HCT116 (cell line): ENCODE measurements at regions of chr16 and their contacts with region 1.

Region 1: DNA sequence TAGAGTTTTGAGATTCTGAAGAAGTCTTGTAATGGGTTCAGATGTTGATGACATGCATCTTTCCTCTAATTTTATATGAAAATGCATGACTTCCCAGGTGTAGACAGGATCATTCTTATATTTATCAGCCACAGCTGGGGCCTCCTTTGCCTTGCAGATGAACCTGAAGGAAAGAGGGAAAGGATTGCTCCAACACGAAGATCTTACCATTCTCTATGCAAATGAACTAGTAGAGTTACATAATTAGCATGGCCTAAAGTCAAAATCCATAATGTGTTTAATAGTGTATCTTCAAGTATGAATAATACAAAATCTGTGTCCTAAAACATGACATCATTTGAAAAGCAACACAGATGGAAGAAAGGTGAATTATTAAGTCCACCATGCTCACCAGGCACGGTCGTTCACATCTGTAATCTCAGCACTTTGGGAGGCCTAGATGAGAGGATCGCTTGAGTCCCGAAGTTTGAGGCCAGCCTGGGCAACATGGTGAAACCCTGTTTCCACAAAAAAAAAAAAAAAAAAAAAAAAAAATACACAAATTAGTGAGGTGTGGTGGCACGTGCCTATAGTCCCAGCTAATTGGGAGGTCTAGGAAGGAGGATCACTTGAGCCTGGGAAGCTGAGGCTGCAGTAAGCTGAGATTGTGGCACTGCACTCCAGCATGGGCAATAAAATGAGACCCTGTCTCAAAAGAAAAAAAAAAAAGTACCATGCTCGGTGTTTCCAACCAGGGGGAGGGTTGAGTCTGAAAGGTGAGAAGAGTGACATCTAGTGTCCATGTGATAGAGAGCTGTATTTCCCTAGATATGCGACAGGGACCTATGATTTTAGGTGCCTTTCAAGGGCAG is 6.3 kb downstream of the VWA3A start:
- DNase-seq: peak; percentile 56
- ATAC-seq: peak; percentile 99
- H3K4me3 ChIP-seq: no peak overlapping the region
- H3K27ac ChIP-seq: no peak overlapping the region
- H3K4me1 ChIP-seq: peaks cover 0 to 11% of the 10 kb centered on the region in 2 experiments; a peak in 2 of 4 replicates
- H3K27me3 ChIP-seq: no peaks in the 10 kb centered on the region
- CTCF ChIP-seq: peak; percentile 66 to 78 (median 76); a peak in 5 of 6 replicates
- POLR2A ChIP-seq: no peak
- RAD21 ChIP-seq: peak; percentile 82

Region 2: GRCh38 chr16:21952793-21953540 is 145.7 kb before region 1 on chr16 and contains the start of gene UQCRC2:
- CTCF ChIA-PET with region 1: interaction called, 16 read pairs
- POLR2A ChIA-PET with region 1: interaction called, 4 read pairs
- RAD21 ChIA-PET with region 1: interaction called, 5 to 7 read pairs
- intact Hi-C with region 1: loop called (anchors 5 kb)
- DNase-seq: peak; percentile 93
- ATAC-seq: peak; percentile 93
- H3K4me3 ChIP-seq: peak within 1 kb of the TSS; percentile 96 to 98
- H3K27ac ChIP-seq: peak within 1 kb of the TSS; percentile 76
- H3K4me1 ChIP-seq: peaks cover 9 to 19% of the 10 kb centered on the region in 2 experiments
- H3K27me3 ChIP-seq: no peaks in the 10 kb centered on the region
- CTCF ChIP-seq: no peak
- POLR2A ChIP-seq: peak; percentile 67
- RAD21 ChIP-seq: no peak
- total RNA-seq, gene UQCRC2: 249 TPM

Region 3: GRCh38 chr16:21989133-21989532 is 109.5 kb before region 1 on chr16:
- CTCF ChIA-PET with region 1: no interaction called
- POLR2A ChIA-PET with region 1: no interaction called
- RAD21 ChIA-PET with region 1: no interaction called
- intact Hi-C with region 1: no loop called
- DNase-seq: no peak
- ATAC-seq: no peak
- H3K4me3 ChIP-seq: no peak overlapping the region
- H3K27ac ChIP-seq: no peak overlapping the region
- H3K4me1 ChIP-seq: peaks cover 0 to 22% of the 10 kb centered on the region in 2 experiments; a peak in 2 of 4 replicates
- H3K27me3 ChIP-seq: no peaks in the 10 kb centered on the region
- CTCF ChIP-seq: no peak
- POLR2A ChIP-seq: no peak
- RAD21 ChIP-seq: no peak

Region 4: GRCh38 chr16:22001591-22001990 is 97.0 kb before region 1 on chr16:
- CTCF ChIA-PET with region 1: interaction called, 29 read pairs
- POLR2A ChIA-PET with region 1: no interaction called
- RAD21 ChIA-PET with region 1: interaction called, 3 read pairs
- intact Hi-C with region 1: no loop called
- DNase-seq: no peak
- ATAC-seq: peak; percentile 11; the same call in 1 of the 2 replicates
- H3K4me3 ChIP-seq: peak overlapping the region in 1 of 2 experiments; percentile 34; a peak in 1 of 4 replicates
- H3K27ac ChIP-seq: no peak overlapping the region
- H3K4me1 ChIP-seq: peaks cover 16 to 29% of the 10 kb centered on the region in 2 experiments
- H3K27me3 ChIP-seq: no peaks in the 10 kb centered on the region
- CTCF ChIP-seq: no peak
- POLR2A ChIP-seq: no peak
- RAD21 ChIP-seq: no peak

Region 5: GRCh38 chr16:22007509-22008214 is 91.0 kb before region 1 on chr16 and contains the start of gene MOSMO:
- CTCF ChIA-PET with region 1: interaction called, 29 read pairs
- POLR2A ChIA-PET with region 1: no interaction called
- RAD21 ChIA-PET with region 1: interaction called in 1 of 2 experiments, 5 read pairs
- intact Hi-C with region 1: no loop called
- DNase-seq: no peak
- ATAC-seq: peak; percentile 85
- H3K4me3 ChIP-seq: peak within 1 kb of the TSS; percentile 88 to 90
- H3K27ac ChIP-seq: peak within 1 kb of the TSS; percentile 85
- H3K4me1 ChIP-seq: peaks cover 17 to 42% of the 10 kb centered on the region in 2 experiments
- H3K27me3 ChIP-seq: no peaks in the 10 kb centered on the region
- CTCF ChIP-seq: no peak
- POLR2A ChIP-seq: no peak
- RAD21 ChIP-seq: no peak
- total RNA-seq, gene MOSMO: 27.6 TPM

Region 6: DNA sequence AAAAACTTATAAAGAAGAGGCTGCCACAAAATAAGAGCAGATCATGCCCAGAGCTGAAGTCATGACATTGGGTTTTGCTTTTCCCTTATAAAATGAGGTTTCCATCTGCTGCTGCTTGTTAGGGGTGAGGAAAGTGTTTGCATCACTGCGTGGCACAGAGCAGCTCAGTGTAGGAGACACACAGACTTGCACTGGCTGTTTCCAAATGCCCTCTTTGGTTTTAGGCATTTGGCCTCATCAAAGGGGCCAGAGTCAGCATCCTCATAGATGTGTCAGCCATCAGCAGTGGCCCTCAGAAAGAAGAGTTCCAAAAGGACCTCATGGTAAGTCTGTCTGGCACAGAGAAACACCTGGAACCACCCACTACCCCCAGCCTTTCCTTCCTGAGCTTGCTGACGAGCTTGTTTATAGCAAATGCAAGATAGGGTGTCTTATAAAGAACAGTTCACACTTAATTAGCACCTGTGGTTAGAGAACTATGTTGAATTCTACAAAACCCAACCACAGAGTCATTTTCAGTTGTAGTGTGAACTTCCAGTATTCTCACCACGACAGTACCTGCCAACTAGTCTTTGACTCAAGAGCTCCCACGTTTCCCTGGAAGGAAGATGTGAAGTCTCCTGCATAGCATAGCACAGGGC is 10.7 kb after region 1 on chr16:
- CTCF ChIA-PET with region 1: interaction called, 12 read pairs
- POLR2A ChIA-PET with region 1: no interaction called
- RAD21 ChIA-PET with region 1: no interaction called
- intact Hi-C with region 1: no loop called
- DNase-seq: no peak
- ATAC-seq: no peak
- H3K4me3 ChIP-seq: no peak overlapping the region
- H3K27ac ChIP-seq: no peak overlapping the region
- H3K4me1 ChIP-seq: no peaks in the 10 kb centered on the region
- H3K27me3 ChIP-seq: peaks cover 22% of the 10 kb centered on the region
- CTCF ChIP-seq: no peak
- POLR2A ChIP-seq: no peak
- RAD21 ChIP-seq: no peak